PC-3 (cell line): ENCODE measurements at regions of chr3 and their contacts with region 1.

Region 1: GRCh38 chr3:20039766-20040475 is at the start of gene KAT2B:
- DNase-seq: peak; percentile 74
- ATAC-seq: peak; percentile 63
- H3K4me3 ChIP-seq: peak within 1 kb of the TSS; percentile 83
- H3K27ac ChIP-seq: no peak within 1 kb of the TSS
- H3K4me1 ChIP-seq: peaks cover 19% of the 10 kb centered on the region; the same call in 1 of the 2 replicates
- H3K27me3 ChIP-seq: no peaks in the 10 kb centered on the region
- CTCF ChIP-seq: peak; percentile 68
- total RNA-seq, gene KAT2B: 10.9 and 11.9 TPM in 2 replicates

Region 2: GRCh38 chr3:19885468-19885867 is 154.5 kb before region 1 on chr3:
- CTCF ChIA-PET with region 1: no interaction called
- POLR2A ChIA-PET with region 1: no interaction called
- intact Hi-C with region 1: loop called (anchors 2 kb)
- DNase-seq: peak; percentile 70
- ATAC-seq: no peak
- H3K4me3 ChIP-seq: no peak overlapping the region
- H3K27ac ChIP-seq: no peak overlapping the region
- H3K4me1 ChIP-seq: peaks cover 16% of the 10 kb centered on the region
- H3K27me3 ChIP-seq: no peaks in the 10 kb centered on the region
- CTCF ChIP-seq: peak; percentile 83

Region 3: DNA sequence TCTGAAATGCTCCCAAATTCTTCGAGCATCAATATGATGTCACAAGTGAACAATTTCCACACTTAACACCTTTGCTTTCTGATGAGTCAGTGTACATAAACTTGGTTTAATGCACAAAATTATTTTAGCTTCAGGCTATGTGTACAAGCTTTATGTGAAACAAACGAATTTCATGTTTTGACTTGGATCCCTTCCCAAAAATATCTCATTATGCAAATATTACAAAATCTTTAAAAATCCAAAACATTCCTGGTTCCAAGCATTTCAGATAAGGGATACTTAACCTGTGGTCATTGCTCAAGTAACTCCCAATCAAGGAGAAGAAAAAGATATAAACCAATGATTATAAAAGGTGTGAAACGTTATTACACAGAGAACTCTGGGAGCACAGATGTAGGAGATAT is 67.9 kb before region 1 on chr3:
- CTCF ChIA-PET with region 1: no interaction called
- POLR2A ChIA-PET with region 1: no interaction called
- intact Hi-C with region 1: loop called (anchors 5 kb)
- DNase-seq: peak; percentile 95
- ATAC-seq: peak; percentile 89
- H3K4me3 ChIP-seq: no peak overlapping the region
- H3K27ac ChIP-seq: no peak overlapping the region
- H3K4me1 ChIP-seq: peaks cover 11% of the 10 kb centered on the region
- H3K27me3 ChIP-seq: no peaks in the 10 kb centered on the region
- CTCF ChIP-seq: no peak

Region 4: GRCh38 chr3:20054549-20054987 is 14.6 kb after region 1 on chr3:
- CTCF ChIA-PET with region 1: interaction called, 3 read pairs
- POLR2A ChIA-PET with region 1: no interaction called
- intact Hi-C with region 1: loop called (anchors 1 kb)
- DNase-seq: peak; percentile 100
- ATAC-seq: peak; percentile 86
- H3K4me3 ChIP-seq: no peak overlapping the region
- H3K27ac ChIP-seq: peak overlapping the region; percentile 66
- H3K4me1 ChIP-seq: peaks cover 45% of the 10 kb centered on the region
- H3K27me3 ChIP-seq: no peaks in the 10 kb centered on the region
- CTCF ChIP-seq: no peak

Region 5: GRCh38 chr3:20111836-20112235 is 71.9 kb after region 1 on chr3:
- CTCF ChIA-PET with region 1: no interaction called
- POLR2A ChIA-PET with region 1: no interaction called
- intact Hi-C with region 1: loop called (anchors 1 kb)
- DNase-seq: peak; percentile 84
- ATAC-seq: peak; percentile 94
- H3K4me3 ChIP-seq: peak overlapping the region; percentile 9; the same call in 1 of the 2 replicates
- H3K27ac ChIP-seq: peak overlapping the region; percentile 71
- H3K4me1 ChIP-seq: peaks cover 32% of the 10 kb centered on the region
- H3K27me3 ChIP-seq: no peaks in the 10 kb centered on the region
- CTCF ChIP-seq: no peak

Region 6: DNA sequence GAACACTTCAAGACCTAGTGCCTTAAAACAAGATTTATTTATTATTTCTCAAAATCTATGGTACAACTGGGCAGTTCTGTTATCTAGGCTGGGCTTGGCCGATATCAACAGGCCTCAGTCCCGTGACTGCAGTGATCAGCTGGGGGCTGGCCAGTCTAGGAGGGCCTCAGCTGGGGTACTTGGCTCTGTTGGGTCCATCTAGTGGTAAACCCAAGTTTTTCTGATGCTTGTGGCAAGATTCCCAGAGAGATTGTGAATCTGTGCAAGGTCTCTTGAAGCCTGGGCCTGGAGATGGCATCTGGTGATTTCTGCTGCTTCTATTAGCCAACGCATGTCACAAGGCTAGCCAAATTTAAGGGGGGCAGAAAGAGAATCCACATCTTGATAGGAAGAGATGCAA is 628.5 kb after region 1 on chr3:
- CTCF ChIA-PET with region 1: no interaction called
- POLR2A ChIA-PET with region 1: no interaction called
- intact Hi-C with region 1: no loop called
- DNase-seq: peak; percentile 19
- ATAC-seq: no peak; the same call in 1 of the 2 replicates
- H3K4me3 ChIP-seq: no peak overlapping the region
- H3K27ac ChIP-seq: no peak overlapping the region
- H3K4me1 ChIP-seq: no peaks in the 10 kb centered on the region
- H3K27me3 ChIP-seq: no peaks in the 10 kb centered on the region
- CTCF ChIP-seq: 0 out of 2 replicates have a peak, but pooled peaks have one; percentile 9